Breast epithelium (tissue), 4 donors: ENCODE measurements at regions of chr17 and their contacts with region 1.

Region 1: DNA sequence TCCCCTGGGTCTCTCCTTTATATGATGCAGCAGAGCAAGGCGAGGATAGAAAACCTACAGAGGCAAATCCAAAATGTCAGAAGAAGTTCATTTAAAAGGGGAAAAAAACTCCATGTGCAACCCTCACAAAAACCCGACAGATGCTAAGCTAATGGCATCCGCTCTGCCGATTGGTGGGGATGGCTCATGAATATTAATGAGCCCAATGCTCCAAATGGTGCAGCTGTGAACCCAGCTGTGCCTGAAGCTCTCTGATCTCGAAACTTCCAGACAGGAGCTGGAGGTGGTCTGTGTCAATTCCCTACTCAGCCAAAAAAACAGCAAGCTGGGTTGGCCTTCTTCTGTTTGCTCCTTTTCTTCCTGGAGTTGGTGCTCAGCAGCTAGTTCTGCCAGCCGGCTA is 15.5 kb downstream of the SNX11 start:
- DNase-seq: no peak
- H3K4me3 ChIP-seq: no peak overlapping the region
- H3K27ac ChIP-seq: no peak overlapping the region
- H3K4me1 ChIP-seq: no peaks in the 10 kb centered on the region
- H3K27me3 ChIP-seq: no peaks in the 10 kb centered on the region
- CTCF ChIP-seq: no peak
- POLR2A ChIP-seq: no peak

Region 2: GRCh38 chr17:46135879-46136563 is 1987.1 kb before region 1 on chr17:
- intact Hi-C with region 1: no loop called
- DNase-seq: no peak
- H3K4me3 ChIP-seq: no peak overlapping the region
- H3K27ac ChIP-seq: no peak overlapping the region
- H3K4me1 ChIP-seq: peaks cover 0 to 5% of the 10 kb centered on the region in 2 donors
- H3K27me3 ChIP-seq: no peaks in the 10 kb centered on the region
- CTCF ChIP-seq: no peak
- POLR2A ChIP-seq: no peak

Region 3: GRCh38 chr17:48024937-48025906 is 97.9 kb before region 1 on chr17:
- intact Hi-C with region 1: loop called (anchors 5 kb)
- DNase-seq: peak; percentile 97 to 99
- H3K4me3 ChIP-seq: peak overlapping the region; percentile 40 to 66 (median 55)
- H3K27ac ChIP-seq: peak overlapping the region; percentile 75 to 84
- H3K4me1 ChIP-seq: peaks cover 16 to 28% of the 10 kb centered on the region in 2 donors
- H3K27me3 ChIP-seq: peaks cover 0 to 3% of the 10 kb centered on the region in 2 donors
- CTCF ChIP-seq: peak; percentile 31 to 89 (median 81)
- POLR2A ChIP-seq: no peak

Region 4: GRCh38 chr17:48054238-48055185 is 68.6 kb before region 1 on chr17:
- intact Hi-C with region 1: no loop called
- DNase-seq: peak; percentile 69 to 83
- H3K4me3 ChIP-seq: peak overlapping the region; percentile 40 to 77 (median 71)
- H3K27ac ChIP-seq: peak overlapping the region; percentile 92 to 96
- H3K4me1 ChIP-seq: peaks cover 37 to 40% of the 10 kb centered on the region in 2 donors
- H3K27me3 ChIP-seq: no peaks in the 10 kb centered on the region
- CTCF ChIP-seq: no peak
- POLR2A ChIP-seq: no peak

Region 5: GRCh38 chr17:48198950-48199541 is 75.9 kb after region 1 on chr17:
- intact Hi-C with region 1: no loop called
- DNase-seq: no peak
- H3K4me3 ChIP-seq: no peak overlapping the region
- H3K27ac ChIP-seq: no peak overlapping the region
- H3K4me1 ChIP-seq: no peaks in the 10 kb centered on the region
- H3K27me3 ChIP-seq: no peaks in the 10 kb centered on the region
- CTCF ChIP-seq: no peak
- POLR2A ChIP-seq: no peak

Region 6: DNA sequence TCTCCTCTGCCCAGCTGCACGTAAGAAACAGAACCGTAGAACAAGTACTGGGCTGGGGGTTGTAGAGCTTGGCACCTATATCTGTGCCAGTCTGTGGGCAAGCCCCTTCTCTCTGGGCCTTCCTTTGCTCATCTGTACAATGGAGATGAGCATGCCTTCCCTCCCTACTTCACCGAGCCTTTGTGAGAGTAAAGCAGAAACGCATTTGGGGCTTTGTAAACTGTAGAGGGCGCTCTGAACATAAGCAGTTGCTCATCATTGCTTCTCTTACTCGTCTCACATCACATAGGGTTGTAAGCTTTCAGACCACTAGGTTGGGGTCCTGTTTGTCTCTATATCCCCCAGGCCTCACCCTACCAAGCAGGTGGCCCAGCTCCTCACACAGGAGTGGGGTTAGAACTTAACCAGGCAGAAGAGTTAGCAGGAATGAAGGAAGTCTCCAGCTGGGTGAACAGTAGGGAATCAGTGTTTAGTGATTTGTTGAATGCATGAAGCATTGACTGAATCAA is 1991.8 kb after region 1 on chr17:
- intact Hi-C with region 1: no loop called
- DNase-seq: no peak
- H3K4me3 ChIP-seq: no peak overlapping the region
- H3K27ac ChIP-seq: no peak overlapping the region
- H3K4me1 ChIP-seq: peaks cover 7 to 10% of the 10 kb centered on the region in 2 donors
- H3K27me3 ChIP-seq: no peaks in the 10 kb centered on the region
- CTCF ChIP-seq: no peak
- POLR2A ChIP-seq: no peak